ENCODE measurements at regions of chr10 and their contacts with region 1.

Region 1: DNA sequence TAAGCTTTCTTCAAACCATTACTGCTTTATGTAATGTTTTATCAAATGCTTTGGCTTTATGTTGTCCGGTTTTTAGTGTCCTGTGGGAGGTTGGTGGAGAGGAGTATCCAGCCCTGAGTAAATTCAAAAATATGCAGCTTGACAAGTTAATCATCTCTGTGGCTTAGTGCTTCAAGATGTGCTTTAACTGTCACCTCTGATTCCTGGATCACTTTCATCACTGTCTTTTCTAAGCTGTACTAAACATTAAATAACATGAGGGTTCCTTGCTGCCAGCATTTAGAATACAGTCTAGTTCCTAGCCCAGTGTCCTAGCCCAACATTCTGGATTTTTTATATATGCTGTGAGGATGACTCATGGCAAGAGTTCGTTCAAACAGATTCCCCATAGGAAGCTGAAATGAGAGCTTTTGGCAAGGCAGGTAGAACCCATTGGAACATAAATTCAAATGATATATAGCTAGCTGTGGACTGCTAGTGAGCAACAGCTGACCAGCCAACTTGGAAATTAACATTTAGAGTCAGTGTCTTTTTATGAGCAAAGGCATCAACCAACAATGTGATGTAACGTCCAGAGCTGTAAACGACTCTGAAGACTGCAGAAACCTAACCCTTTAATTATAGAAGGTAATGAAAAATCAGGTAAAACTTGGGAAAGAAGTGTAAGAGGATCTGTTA is 80.6 kb upstream of the OIT3 start:
- DNase-seq: peak; percentile 8
- ATAC-seq: peak; percentile 72
- H3K4me3 ChIP-seq: no peak overlapping the region
- H3K27ac ChIP-seq: peak overlapping the region; percentile 12; the same call in 1 of the 2 replicates
- H3K4me1 ChIP-seq: peaks cover 12% of the 10 kb centered on the region
- H3K27me3 ChIP-seq: no peaks in the 10 kb centered on the region
- CTCF ChIP-seq: no peak

Region 2: DNA sequence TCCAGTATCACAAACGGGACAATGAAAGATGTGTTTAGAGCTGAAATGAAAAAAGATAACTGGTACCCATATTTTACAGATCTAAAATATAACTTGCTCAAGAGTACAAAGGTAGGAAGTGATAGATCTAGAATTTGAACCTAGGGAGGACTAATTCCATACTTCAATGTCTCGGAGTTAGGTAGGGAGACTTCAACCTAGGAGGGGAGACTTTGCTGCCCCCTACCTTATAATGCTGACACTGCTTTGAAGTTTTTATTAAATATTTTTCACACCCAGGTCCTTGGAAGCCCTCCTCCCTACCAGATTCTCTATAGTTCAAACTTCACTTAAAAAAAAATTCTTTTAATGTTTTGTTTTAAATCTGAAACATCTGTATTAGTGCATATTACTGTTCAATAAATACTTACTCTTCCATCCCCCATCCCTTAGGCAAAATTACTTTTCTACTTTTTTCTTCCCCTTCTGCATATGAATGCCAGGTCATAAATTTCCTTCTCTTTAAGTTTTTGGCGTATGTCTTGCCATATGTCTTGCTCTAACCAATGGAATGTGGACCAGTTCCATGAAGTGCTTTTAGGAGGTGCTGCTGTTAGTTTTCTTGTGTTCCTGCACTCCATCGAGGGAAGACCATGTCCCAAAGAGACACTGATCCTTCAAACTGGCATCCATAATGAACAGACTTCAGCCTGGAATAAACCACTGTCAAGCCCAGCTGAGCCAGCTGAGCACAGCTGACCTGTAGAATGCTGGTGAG is 244.8 kb before region 1 on chr10:
- CTCF ChIA-PET with region 1: no interaction called
- POLR2A ChIA-PET with region 1: interaction called, 14 read pairs
- in situ Hi-C with region 1: no loop called
- intact Hi-C with region 1: no loop called
- DNase-seq: peak; percentile 46
- ATAC-seq: peak; percentile 75
- H3K4me3 ChIP-seq: no peak overlapping the region
- H3K27ac ChIP-seq: no peak overlapping the region
- H3K4me1 ChIP-seq: peaks cover 6% of the 10 kb centered on the region
- H3K27me3 ChIP-seq: no peaks in the 10 kb centered on the region
- CTCF ChIP-seq: peak; percentile 69; the same call in 1 of the 2 replicates

Region 3: GRCh38 chr10:72702868-72703581 is 109.9 kb before region 1 on chr10:
- CTCF ChIA-PET with region 1: no interaction called
- POLR2A ChIA-PET with region 1: no interaction called
- in situ Hi-C with region 1: no loop called
- intact Hi-C with region 1: no loop called
- DNase-seq: no peak
- ATAC-seq: no peak
- H3K4me3 ChIP-seq: no peak overlapping the region
- H3K27ac ChIP-seq: no peak overlapping the region
- H3K4me1 ChIP-seq: no peaks in the 10 kb centered on the region
- H3K27me3 ChIP-seq: no peaks in the 10 kb centered on the region
- CTCF ChIP-seq: no peak

Measured in Panc1 (cell line).